ENCODE measurements at regions of chr6 and their contacts with region 1.

Region 1: GRCh38 chr6:107489636-107490565 is at the start of gene SOBP:
- DNase-seq: peak; percentile 47 to 52
- ATAC-seq: peak; percentile 16 to 21
- H3K4me3 ChIP-seq: peak within 1 kb of the TSS; percentile 69 to 94 (median 84)
- H3K27ac ChIP-seq: peak within 1 kb of the TSS; percentile 90 to 95 (median 92)
- H3K4me1 ChIP-seq: peaks cover 28 to 35% of the 10 kb centered on the region in 2 donors
- H3K27me3 ChIP-seq: no peaks in the 10 kb centered on the region
- CTCF ChIP-seq: peak in 3 of 5 experiments; percentile 4 to 20 (median 19)
- POLR2A ChIP-seq: peak; percentile 45 to 53
- total RNA-seq, gene SOBP: 3.8 to 32.5 (median 19.4) TPM

Region 2: DNA sequence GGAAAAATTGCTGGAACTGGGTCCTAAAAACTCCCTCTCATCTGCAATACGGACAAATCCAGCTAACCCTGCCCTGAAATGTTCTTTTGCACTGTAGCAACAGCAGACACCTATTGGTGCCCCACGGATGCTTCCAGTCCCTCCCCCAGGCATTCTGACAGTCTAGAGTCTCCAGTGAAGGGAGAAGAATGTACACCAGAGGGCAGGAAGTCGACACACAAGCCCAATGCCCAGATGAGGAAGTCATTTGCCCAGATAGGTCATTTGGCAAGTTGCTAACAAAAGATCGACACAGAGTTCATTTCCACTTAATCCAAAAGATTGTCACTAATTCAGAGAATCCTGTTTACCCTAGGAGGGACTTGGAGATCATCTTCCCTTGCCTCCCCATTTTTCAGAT is 1696.8 kb before region 1 on chr6:
- in situ Hi-C with region 1: no loop called
- intact Hi-C with region 1: loop called (anchors 10 kb)
- DNase-seq: no peak
- ATAC-seq: no peak
- H3K4me3 ChIP-seq: no peak overlapping the region
- H3K27ac ChIP-seq: peak overlapping the region in 3 of 4 donors; percentile 81 to 91 (median 90)
- H3K4me1 ChIP-seq: peaks cover 46 to 49% of the 10 kb centered on the region in 2 donors
- H3K27me3 ChIP-seq: no peaks in the 10 kb centered on the region
- CTCF ChIP-seq: no peak
- POLR2A ChIP-seq: no peak

Region 3: GRCh38 chr6:107540465-107540857 is 50.6 kb after region 1 on chr6:
- in situ Hi-C with region 1: no loop called
- intact Hi-C with region 1: loop called (anchors 5 kb)
- DNase-seq: no peak
- ATAC-seq: no peak
- H3K4me3 ChIP-seq: no peak overlapping the region
- H3K27ac ChIP-seq: no peak overlapping the region
- H3K4me1 ChIP-seq: peaks cover 38 to 41% of the 10 kb centered on the region in 2 donors
- H3K27me3 ChIP-seq: no peaks in the 10 kb centered on the region
- CTCF ChIP-seq: no peak
- POLR2A ChIP-seq: no peak

Region 4: GRCh38 chr6:107560657-107561056 is 70.8 kb after region 1 on chr6:
- in situ Hi-C with region 1: no loop called
- intact Hi-C with region 1: no loop called
- DNase-seq: no peak
- ATAC-seq: peak; percentile 54 to 68
- H3K4me3 ChIP-seq: no peak overlapping the region
- H3K27ac ChIP-seq: peak overlapping the region; percentile 46 to 65 (median 58)
- H3K4me1 ChIP-seq: no peaks in the 10 kb centered on the region
- H3K27me3 ChIP-seq: no peaks in the 10 kb centered on the region
- CTCF ChIP-seq: no peak
- POLR2A ChIP-seq: no peak

Region 5: GRCh38 chr6:107674995-107675738 is 185.3 kb after region 1 on chr6:
- in situ Hi-C with region 1: loop called in 2 of 4 experiments (anchors 25 kb)
- intact Hi-C with region 1: loop called (anchors 2 kb)
- DNase-seq: peak; percentile 73 to 74
- ATAC-seq: peak; percentile 86 to 93
- H3K4me3 ChIP-seq: peak overlapping the region; percentile 34 to 47 (median 38)
- H3K27ac ChIP-seq: peak overlapping the region; percentile 61 to 82 (median 76)
- H3K4me1 ChIP-seq: peaks cover 32 to 35% of the 10 kb centered on the region in 2 donors
- H3K27me3 ChIP-seq: no peaks in the 10 kb centered on the region
- CTCF ChIP-seq: peak; percentile 80 to 93 (median 90)
- POLR2A ChIP-seq: no peak

Region 6: DNA sequence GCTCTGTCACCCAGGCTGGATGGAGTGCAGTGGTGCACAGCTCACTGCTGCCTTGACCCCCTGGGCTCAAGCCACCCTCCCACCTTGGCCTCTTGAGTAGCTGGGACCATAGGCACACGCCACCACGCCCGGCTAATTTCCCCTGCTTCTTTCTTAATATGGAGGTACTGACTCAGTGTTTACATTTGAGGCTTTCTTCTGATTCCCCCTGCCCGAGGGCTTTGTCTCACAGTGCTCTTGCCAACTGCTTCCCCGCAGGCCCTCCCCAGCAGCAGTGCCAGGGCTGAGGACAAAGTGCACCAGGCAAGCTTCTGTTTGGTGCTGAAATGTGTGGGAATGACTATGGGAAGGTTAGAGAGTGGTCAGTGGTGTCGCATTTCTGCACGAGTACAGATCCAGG is 710.7 kb after region 1 on chr6:
- in situ Hi-C with region 1: no loop called
- intact Hi-C with region 1: no loop called
- DNase-seq: no peak
- ATAC-seq: no peak
- H3K4me3 ChIP-seq: no peak overlapping the region
- H3K27ac ChIP-seq: no peak overlapping the region
- H3K4me1 ChIP-seq: peaks cover 7 to 8% of the 10 kb centered on the region in 2 donors
- H3K27me3 ChIP-seq: no peaks in the 10 kb centered on the region
- CTCF ChIP-seq: no peak
- POLR2A ChIP-seq: no peak

Region 7: GRCh38 chr6:108921547-108922361 is 1431.9 kb after region 1 on chr6:
- in situ Hi-C with region 1: no loop called
- intact Hi-C with region 1: loop called (anchors 5 kb)
- DNase-seq: peak; percentile 73 to 78
- ATAC-seq: peak; percentile 90 to 95
- H3K4me3 ChIP-seq: no peak overlapping the region
- H3K27ac ChIP-seq: peak overlapping the region; percentile 54 to 64 (median 62)
- H3K4me1 ChIP-seq: peaks cover 15 to 22% of the 10 kb centered on the region in 2 donors
- H3K27me3 ChIP-seq: no peaks in the 10 kb centered on the region
- CTCF ChIP-seq: no peak
- POLR2A ChIP-seq: no peak

Measured in gastrocnemius medialis (tissue), 4 donors.